K562 (cell line): ENCODE measurements at regions of chr1 and their contacts with region 1.

Region 1: DNA sequence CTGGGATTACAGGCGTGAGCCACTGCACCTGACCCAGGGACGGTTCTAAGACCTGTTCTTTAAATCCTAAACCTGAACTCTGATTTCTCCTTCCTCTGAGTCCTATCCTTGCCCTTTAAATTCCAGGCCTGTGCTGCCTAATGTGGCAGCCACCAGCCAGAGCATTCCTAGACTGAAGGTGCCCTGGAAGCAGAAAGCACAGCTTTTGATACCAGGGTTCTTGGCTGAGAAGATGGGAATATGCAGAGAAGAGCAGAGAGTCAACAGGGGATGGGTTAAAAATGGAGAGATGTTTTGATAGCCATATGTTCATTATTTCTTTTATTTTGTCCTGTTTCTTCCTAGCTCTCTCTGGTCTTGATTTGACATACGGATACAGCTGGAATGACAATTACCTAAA is 49.7 kb downstream of the RYR2 start:
- DNase-seq: no peak
- ATAC-seq: no peak
- H3K4me3 ChIP-seq: no peak overlapping the region
- H3K27ac ChIP-seq: no peak overlapping the region
- H3K4me1 ChIP-seq: no peaks in the 10 kb centered on the region
- H3K27me3 ChIP-seq: peaks cover 2 to 15% of the 10 kb centered on the region in 2 experiments; a peak in 3 of 5 replicates
- CTCF ChIP-seq: no peak
- EP300 ChIP-seq: no peak
- POLR2A ChIP-seq: no peak
- RAD21 ChIP-seq: no peak

Region 2: DNA sequence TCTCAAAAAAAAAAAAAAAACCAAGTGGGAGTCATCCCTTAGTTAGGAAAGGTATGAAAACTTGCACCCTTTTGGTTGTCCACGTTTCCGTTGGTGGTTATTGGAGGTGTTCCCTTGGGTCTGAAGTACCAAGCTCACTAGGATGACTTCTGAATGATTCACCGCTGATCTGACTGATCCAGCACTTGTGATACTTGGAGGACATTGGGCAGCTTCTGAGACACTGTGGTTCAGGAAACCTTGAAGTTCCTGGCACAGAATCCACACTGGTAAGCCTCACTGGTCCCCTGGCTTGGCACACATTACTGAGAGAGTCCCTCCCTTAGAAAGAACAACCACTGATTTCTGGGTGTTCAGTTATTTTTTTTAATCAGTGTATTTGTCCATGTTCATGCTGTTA is 42.2 kb after region 1 on chr1:
- CTCF ChIA-PET with region 1: no interaction called
- POLR2A ChIA-PET with region 1: no interaction called
- in situ Hi-C with region 1: loop called (anchors 5 kb)
- intact Hi-C with region 1: no loop called
- DNase-seq: no peak
- ATAC-seq: no peak
- H3K4me3 ChIP-seq: no peak overlapping the region
- H3K27ac ChIP-seq: no peak overlapping the region
- H3K4me1 ChIP-seq: no peaks in the 10 kb centered on the region
- H3K27me3 ChIP-seq: no peaks in the 10 kb centered on the region; a peak in 1 of 5 replicates
- CTCF ChIP-seq: no peak
- EP300 ChIP-seq: no peak
- POLR2A ChIP-seq: no peak
- RAD21 ChIP-seq: no peak